Activated CD4-positive, alpha-beta memory T cell treated with anti-CD3 and anti-CD28 coated beads, Interleukin-2, amount 10 ng/mL, durations not matched to agents 7 days and 5 days (primary cell): ENCODE measurements at regions of chr16 and their contacts with region 1.

Region 1: GRCh38 chr16:67246934-67247697 is at the start of gene FHOD1:
- DNase-seq: peak; percentile 99
- H3K4me3 Mint-ChIP-seq: peak within 1 kb of the TSS; percentile 85
- H3K27ac Mint-ChIP-seq: peak within 1 kb of the TSS; percentile 86
- H3K4me1 Mint-ChIP-seq: peaks cover 55% of the 10 kb centered on the region
- H3K27me3 Mint-ChIP-seq: peaks cover 17% of the 10 kb centered on the region
- total RNA-seq, gene FHOD1: 94.8 to 99.1 TPM

Region 2: GRCh38 chr16:67191995-67192681 is 55.0 kb before region 1 on chr16 and contains the start of gene E2F4:
- CTCF ChIA-PET with region 1: interaction called, 5 read pairs
- POLR2A ChIA-PET with region 1: interaction called, 18 read pairs
- DNase-seq: peak; percentile 91
- H3K4me3 Mint-ChIP-seq: peak within 1 kb of the TSS; percentile 86
- H3K27ac Mint-ChIP-seq: peak within 1 kb of the TSS; percentile 83
- H3K4me1 Mint-ChIP-seq: peaks cover 50% of the 10 kb centered on the region
- H3K27me3 Mint-ChIP-seq: no peaks in the 10 kb centered on the region
- total RNA-seq, gene E2F4: 127 to 131 TPM

Region 3: DNA sequence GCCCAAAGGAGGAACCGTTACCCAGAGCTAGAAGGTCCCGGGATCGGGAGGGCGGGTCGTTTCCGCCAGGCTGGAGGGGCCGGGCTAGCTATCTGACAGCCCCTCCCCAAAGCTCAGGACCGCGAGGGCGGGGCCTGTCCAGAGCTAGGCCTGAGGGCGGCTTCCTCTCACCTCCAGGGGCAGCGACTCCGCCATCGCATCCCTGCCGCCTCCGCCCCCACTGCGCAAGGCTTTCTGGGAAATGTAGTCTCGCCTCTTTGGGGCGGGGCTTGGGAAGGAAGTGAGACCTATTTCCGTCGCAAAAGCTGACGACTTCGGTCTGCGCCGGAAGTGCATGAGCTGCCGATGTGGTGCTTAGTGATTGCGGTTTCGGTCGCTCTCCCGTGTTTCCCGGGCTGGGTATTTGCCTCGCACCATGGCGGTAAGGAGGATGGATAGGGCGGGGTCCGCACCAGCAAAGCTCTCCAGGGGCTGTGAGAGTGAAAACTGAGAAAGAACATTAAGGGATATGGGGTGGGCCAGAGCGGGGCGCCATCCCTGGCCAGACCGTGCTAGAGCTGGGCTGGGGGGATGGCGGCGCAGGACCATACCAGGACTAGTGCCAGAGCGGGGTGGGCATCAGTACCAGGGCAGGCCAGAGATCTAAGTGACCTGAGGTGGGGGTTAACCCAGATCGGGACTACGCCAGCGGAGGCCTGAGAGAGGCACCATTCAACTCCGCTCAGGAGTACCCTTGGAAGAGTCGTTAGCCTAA is 20.1 kb before region 1 on chr16 and contains the start of gene TMEM208:
- CTCF ChIA-PET with region 1: interaction called, 58 read pairs
- POLR2A ChIA-PET with region 1: interaction called, 187 read pairs
- DNase-seq: peak; percentile 99
- H3K4me3 Mint-ChIP-seq: peak within 1 kb of the TSS; percentile 100
- H3K27ac Mint-ChIP-seq: peak within 1 kb of the TSS; percentile 97
- H3K4me1 Mint-ChIP-seq: peaks cover 61% of the 10 kb centered on the region
- H3K27me3 Mint-ChIP-seq: no peaks in the 10 kb centered on the region
- total RNA-seq, gene TMEM208: 39.6 to 39.7 TPM

Region 4: DNA sequence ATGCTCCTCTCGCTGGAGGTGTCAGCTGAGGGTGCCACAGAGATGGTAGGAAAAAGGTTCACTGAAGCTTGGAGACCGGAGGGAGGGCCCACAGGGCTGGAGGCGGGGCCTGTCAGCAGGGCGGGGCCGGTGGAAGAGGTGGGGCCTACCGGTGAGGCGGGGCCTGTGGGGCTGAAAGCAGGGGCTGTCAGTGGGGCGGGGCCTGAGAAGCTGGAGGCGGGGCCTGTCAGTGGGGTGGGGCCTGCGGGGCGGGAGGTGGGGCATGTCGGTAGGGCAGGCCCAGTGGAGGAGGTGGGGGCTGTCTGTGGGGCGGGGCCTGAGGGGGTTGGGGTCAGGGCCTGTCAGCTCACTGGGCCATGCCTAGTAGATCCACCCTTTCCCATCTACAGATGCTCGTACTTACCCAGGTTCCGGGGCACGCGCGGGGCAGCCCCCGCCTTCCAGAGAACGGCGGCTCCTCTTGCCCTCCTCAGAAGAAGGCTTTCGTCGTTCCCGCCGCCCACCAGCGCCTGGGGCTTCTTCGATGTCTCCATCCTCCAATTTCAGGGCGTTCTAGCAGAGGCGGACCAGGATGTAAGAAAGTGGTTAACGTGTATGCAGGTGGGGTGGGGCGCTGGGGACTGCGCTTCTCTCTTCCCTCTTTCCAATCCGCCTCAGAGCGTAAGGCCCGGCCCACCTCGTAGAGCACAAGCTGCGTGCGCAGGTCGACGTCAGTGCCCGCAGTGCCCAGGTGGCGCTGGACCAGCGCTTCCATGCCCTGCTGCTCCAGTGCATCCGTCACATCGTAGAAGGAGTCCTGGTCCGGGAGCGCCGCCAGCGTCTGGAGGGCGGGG is 10.3 kb before region 1 on chr16:
- CTCF ChIA-PET with region 1: interaction called, 7 read pairs
- POLR2A ChIA-PET with region 1: interaction called, 97 read pairs
- DNase-seq: peak; percentile 92
- H3K4me3 Mint-ChIP-seq: peak overlapping the region; percentile 75
- H3K27ac Mint-ChIP-seq: peak overlapping the region; percentile 97
- H3K4me1 Mint-ChIP-seq: peaks cover 44% of the 10 kb centered on the region
- H3K27me3 Mint-ChIP-seq: no peaks in the 10 kb centered on the region

Region 5: DNA sequence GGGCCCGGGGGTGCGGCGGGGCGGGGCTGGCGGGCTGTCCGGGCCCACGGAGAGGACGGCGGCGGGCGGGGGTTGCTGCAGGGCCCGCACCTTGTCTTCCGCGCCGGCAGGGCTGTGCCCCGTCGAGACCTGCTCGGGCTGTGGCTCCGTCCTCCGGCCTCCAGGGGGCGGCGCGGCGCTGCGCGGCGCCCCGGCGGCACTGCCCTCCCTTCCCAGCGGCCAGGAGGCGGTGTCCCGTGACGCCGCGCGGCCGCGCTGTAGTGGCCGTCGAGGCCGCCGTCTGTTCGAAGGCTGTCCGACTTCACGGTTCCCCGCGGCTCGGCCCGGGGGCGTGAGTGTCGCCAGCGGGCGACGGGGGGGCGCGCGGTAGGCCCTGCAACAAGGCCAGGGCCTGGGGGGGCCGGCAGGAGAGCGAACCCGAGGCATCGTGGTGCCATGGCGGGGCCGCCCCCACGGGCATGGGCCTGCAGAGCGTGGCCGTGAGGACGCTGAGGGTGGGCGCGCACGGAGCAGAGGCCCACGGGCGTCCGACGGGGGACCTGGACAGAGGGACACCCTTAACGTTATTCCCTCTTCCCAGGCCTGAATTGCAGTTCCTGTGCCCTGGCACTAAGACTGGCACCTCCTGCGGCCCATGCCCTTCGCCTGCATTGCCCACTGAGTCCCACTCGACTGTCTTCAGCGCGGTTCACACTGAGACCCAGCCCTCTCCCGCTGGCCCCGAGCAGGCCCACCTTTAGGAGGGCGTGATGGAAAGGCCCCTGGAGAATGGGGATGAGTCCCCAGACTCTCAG is 32.4 kb after region 1 on chr16 and contains the start of gene PLEKHG4:
- CTCF ChIA-PET with region 1: interaction called, 11 read pairs
- POLR2A ChIA-PET with region 1: interaction called, 8 read pairs
- DNase-seq: peak; percentile 87
- H3K4me3 Mint-ChIP-seq: peak within 1 kb of the TSS; percentile 82
- H3K27ac Mint-ChIP-seq: peak within 1 kb of the TSS; percentile 69
- H3K4me1 Mint-ChIP-seq: peaks cover 24% of the 10 kb centered on the region
- H3K27me3 Mint-ChIP-seq: no peaks in the 10 kb centered on the region
- total RNA-seq, gene PLEKHG4: 9.2 to 10.9 TPM

Region 6: DNA sequence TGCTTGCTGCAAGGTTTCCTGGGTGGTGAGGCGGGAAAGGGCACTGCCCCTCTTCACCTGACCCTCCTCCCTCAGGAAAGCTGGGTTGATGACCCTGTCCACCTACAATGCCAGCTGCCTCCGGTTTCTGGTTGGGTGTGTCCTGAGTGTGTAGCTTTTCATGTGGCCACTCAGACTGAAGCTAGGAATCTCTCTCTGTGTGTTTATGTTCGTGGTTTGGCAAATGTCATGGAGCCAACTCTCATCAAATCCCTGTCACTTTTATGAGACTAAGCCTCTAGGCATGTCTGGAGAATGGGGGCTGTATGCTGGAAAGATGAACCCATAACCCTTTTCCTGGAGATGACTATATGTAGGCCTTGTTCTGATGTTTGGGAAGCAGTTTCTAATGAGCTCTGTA is 49.3 kb after region 1 on chr16:
- CTCF ChIA-PET with region 1: no interaction called
- POLR2A ChIA-PET with region 1: no interaction called
- DNase-seq: no peak
- H3K4me3 Mint-ChIP-seq: no peak overlapping the region
- H3K27ac Mint-ChIP-seq: no peak overlapping the region
- H3K4me1 Mint-ChIP-seq: no peaks in the 10 kb centered on the region
- H3K27me3 Mint-ChIP-seq: peaks cover 8% of the 10 kb centered on the region